Right ventricle myocardium inferior (tissue), 1 donor: ENCODE measurements at regions of chr14 and their contacts with region 1.

Region 1: GRCh38 chr14:59333668-59334067 is 131.5 kb downstream of the GPR135 start:
- DNase-seq: no peak
- ATAC-seq: peak; percentile 94

Region 2: DNA sequence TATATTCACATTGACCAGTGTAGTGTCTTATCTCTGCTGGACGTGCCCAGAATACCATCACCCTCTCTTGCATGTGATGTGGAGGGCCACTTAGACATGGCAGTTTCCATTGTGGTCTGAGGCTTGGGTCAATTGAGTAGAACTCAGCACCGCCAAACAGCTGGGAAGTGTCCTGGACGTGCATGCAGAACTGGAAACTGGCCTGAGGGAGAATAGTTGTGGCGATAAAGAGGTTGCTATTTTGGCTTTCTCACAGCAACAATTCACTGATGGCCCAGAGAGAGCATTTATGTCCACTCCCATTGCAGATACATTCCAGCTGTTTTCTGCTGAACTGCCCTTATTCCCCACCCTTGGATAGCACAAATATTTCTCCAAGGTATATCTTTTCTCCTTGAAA is 355.3 kb before region 1 on chr14:
- intact Hi-C with region 1: no loop called
- DNase-seq: peak; percentile 82
- ATAC-seq: peak; percentile 94

Region 3: GRCh38 chr14:59360923-59361794 is 27.5 kb after region 1 on chr14:
- intact Hi-C with region 1: loop called (anchors 2 kb)
- DNase-seq: peak; percentile 80
- ATAC-seq: peak; percentile 64

Region 4: GRCh38 chr14:59374048-59374447 is 40.4 kb after region 1 on chr14:
- intact Hi-C with region 1: loop called (anchors 5 kb)
- DNase-seq: no peak
- ATAC-seq: no peak

Region 5: GRCh38 chr14:59428581-59429012 is 94.9 kb after region 1 on chr14:
- intact Hi-C with region 1: loop called (anchors 5 kb)
- DNase-seq: no peak
- ATAC-seq: no peak

Region 6: DNA sequence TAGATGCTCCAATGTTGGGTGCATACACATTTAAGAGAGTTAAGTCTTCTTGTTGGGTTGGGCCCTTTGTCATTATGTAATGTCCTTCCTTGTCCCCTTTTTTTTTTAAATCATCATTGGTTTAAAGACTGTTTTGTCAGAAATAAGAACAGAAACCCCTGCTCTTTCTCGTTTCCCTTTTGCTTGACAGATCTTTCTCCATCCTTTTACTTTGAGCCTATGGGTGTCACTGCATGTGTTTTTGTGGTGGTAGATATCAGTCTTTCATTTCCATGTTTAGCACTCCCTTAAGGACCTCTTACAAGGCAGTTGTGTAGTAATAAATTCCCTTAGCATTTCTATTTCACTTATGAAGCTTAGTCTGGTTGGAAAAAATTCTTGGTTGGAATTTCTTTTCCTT is 489.5 kb after region 1 on chr14:
- intact Hi-C with region 1: no loop called
- DNase-seq: no peak
- ATAC-seq: no peak